HCT116 (cell line): ENCODE measurements at regions of chr7 and their contacts with region 1.

Region 1: GRCh38 chr7:127091620-127092019 is 161.1 kb downstream of the GRM8 start:
- DNase-seq: no peak
- ATAC-seq: no peak
- H3K4me3 ChIP-seq: no peak overlapping the region
- H3K27ac ChIP-seq: no peak overlapping the region
- H3K4me1 ChIP-seq: no peaks in the 10 kb centered on the region
- H3K27me3 ChIP-seq: no peaks in the 10 kb centered on the region; the same call in 1 of the 2 replicates
- CTCF ChIP-seq: no peak
- POLR2A ChIP-seq: no peak
- RAD21 ChIP-seq: no peak

Region 2: GRCh38 chr7:126589058-126589684 is 502.4 kb before region 1 on chr7:
- CTCF ChIA-PET with region 1: no interaction called
- POLR2A ChIA-PET with region 1: no interaction called
- RAD21 ChIA-PET with region 1: no interaction called
- intact Hi-C with region 1: loop called (anchors 5 kb)
- DNase-seq: no peak
- ATAC-seq: no peak
- H3K4me3 ChIP-seq: no peak overlapping the region
- H3K27ac ChIP-seq: no peak overlapping the region
- H3K4me1 ChIP-seq: no peaks in the 10 kb centered on the region
- H3K27me3 ChIP-seq: no peaks in the 10 kb centered on the region
- CTCF ChIP-seq: no peak
- POLR2A ChIP-seq: no peak
- RAD21 ChIP-seq: no peak

Region 3: DNA sequence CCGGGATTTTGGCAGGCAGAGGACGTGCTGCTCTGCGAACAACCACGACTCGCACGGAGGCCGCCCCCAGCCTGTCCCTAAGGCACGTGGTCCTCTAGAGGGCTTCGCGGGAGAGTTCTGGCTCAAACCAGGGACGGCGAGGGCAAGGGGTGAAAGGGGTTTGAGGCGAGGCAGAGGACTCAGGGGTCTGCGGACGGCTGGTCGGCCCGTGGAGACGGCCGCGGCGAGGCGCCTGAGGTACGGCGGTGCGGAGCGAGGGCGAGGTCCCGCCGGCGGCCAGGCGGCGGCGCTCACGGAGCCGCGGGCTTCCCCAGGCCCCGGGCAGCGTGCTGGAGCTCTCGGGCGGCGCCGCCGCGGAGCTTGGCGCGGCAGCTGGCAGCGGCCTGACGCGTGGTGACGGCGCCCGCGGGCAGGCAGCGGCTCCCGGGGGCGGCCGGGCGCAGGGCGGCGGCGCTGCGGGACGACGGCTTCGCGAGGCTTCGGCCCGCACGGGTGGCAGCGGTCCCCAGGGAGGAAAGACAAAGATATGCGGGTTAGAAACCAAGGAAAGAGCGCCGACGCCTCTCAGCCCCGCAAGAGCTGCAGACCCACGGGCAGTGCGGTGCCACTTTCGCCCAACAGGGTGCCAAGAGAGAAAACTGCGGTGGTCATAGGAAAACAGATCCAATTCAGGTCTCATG is 256.1 kb after region 1 on chr7:
- CTCF ChIA-PET with region 1: no interaction called
- POLR2A ChIA-PET with region 1: no interaction called
- RAD21 ChIA-PET with region 1: no interaction called
- intact Hi-C with region 1: no loop called
- DNase-seq: no peak
- ATAC-seq: no peak
- H3K4me3 ChIP-seq: no peak overlapping the region
- H3K27ac ChIP-seq: no peak overlapping the region
- H3K4me1 ChIP-seq: no peaks in the 10 kb centered on the region
- H3K27me3 ChIP-seq: no peaks in the 10 kb centered on the region
- CTCF ChIP-seq: no peak
- POLR2A ChIP-seq: no peak
- RAD21 ChIP-seq: no peak

Region 4: DNA sequence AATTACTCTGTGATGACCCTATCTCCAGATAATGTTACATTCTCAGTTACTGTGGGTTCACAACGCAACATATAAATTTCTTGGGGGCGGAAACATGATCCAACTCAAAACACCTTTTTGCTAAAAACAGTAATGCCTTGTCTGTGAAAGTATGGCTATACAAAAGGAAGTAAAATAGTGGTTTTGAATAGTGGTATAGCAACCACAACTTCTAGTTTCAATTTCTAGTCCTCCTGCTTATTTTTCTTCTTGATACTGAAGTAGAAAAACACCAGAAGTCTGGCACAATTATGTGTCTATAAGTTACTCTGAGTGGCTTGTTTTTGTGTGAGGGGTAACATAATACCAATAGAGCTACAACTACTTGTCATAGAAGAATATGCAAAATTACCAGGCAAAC is 322.3 kb after region 1 on chr7:
- CTCF ChIA-PET with region 1: no interaction called
- POLR2A ChIA-PET with region 1: no interaction called
- RAD21 ChIA-PET with region 1: no interaction called
- intact Hi-C with region 1: no loop called
- DNase-seq: no peak
- ATAC-seq: no peak
- H3K4me3 ChIP-seq: no peak overlapping the region
- H3K27ac ChIP-seq: no peak overlapping the region
- H3K4me1 ChIP-seq: no peaks in the 10 kb centered on the region
- H3K27me3 ChIP-seq: peaks cover 6% of the 10 kb centered on the region
- CTCF ChIP-seq: no peak
- POLR2A ChIP-seq: no peak
- RAD21 ChIP-seq: no peak